H1 (cell line): ENCODE measurements at regions of chr11 and their contacts with region 1.

Region 1: DNA sequence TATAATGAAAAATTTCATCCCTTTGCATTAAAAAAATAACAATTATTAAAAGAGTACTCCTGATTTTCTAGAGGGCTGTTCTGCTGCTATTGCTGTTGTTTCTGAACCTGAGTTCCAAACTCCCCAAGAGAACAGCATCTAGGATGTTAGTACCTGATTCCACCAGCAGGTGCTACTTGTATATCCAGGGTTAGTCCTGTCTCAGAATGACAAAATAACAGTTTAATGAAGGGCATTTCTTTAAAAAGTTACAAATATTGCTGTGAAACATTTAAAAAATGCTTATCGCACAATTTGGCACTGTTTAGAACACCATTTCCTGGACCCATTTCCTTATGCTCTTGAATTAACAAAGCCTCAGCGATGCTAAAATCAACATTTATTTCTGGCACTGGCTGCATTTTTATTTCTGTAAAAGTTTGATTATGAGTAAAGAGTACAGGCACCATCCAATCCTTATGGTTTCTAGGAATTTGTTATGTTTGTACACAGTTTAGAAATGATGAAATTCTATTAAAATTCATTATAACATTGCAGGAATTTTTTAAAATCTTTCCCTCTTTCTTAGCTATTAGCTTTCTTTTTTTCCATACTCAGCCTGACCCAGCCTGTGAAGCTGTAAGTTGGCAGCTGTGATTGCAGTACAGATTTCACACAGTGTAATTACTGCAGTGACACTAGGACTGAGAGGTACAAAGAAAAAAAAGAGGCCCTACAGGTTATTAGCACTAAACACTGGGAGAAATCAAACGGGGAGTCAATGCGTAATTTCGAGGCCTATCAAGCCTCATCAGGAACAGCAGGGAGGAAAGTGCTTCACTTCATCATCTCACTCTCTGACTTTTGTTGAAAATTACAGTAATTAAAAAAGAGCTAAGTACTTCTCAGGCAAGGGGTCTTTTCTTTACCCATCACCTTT is 208.8 kb downstream of the DCDC1 start:
- DNase-seq: no peak
- H3K4me3 ChIP-seq: no peak overlapping the region
- H3K27ac ChIP-seq: no peak overlapping the region
- H3K4me1 ChIP-seq: no peaks in the 10 kb centered on the region; a peak in 1 of 7 replicates
- H3K27me3 ChIP-seq: no peaks in the 10 kb centered on the region
- CTCF ChIP-seq: peak in 2 of 3 experiments; percentile 41 to 47; a peak in 2 of 4 replicates
- EP300 ChIP-seq: no peak
- POLR2A ChIP-seq: no peak
- RAD21 ChIP-seq: 0 out of 4 replicates have a peak, but pooled peaks of 1 of the 2 experiments have one; percentile 12

Region 2: GRCh38 chr11:31173926-31174680 is 13.3 kb after region 1 on chr11:
- CTCF ChIA-PET with region 1: interaction called, 15 read pairs
- POLR2A ChIA-PET with region 1: no interaction called
- DNase-seq: no peak
- H3K4me3 ChIP-seq: no peak overlapping the region
- H3K27ac ChIP-seq: no peak overlapping the region
- H3K4me1 ChIP-seq: no peaks in the 10 kb centered on the region
- H3K27me3 ChIP-seq: no peaks in the 10 kb centered on the region
- CTCF ChIP-seq: no peak
- EP300 ChIP-seq: no peak
- POLR2A ChIP-seq: no peak
- RAD21 ChIP-seq: no peak